ENCODE measurements at regions of chr15 and their contacts with region 1.

Region 1: GRCh38 chr15:101014921-101015841 is 96.0 kb downstream of the LRRK1 start:
- DNase-seq: peak in 1 of 2 donors; percentile 80
- ATAC-seq: peak; percentile 68

Region 2: GRCh38 chr15:100842756-100843725 is 172.1 kb before region 1 on chr15:
- intact Hi-C with region 1: no loop called
- DNase-seq: no peak
- ATAC-seq: no peak

Region 3: DNA sequence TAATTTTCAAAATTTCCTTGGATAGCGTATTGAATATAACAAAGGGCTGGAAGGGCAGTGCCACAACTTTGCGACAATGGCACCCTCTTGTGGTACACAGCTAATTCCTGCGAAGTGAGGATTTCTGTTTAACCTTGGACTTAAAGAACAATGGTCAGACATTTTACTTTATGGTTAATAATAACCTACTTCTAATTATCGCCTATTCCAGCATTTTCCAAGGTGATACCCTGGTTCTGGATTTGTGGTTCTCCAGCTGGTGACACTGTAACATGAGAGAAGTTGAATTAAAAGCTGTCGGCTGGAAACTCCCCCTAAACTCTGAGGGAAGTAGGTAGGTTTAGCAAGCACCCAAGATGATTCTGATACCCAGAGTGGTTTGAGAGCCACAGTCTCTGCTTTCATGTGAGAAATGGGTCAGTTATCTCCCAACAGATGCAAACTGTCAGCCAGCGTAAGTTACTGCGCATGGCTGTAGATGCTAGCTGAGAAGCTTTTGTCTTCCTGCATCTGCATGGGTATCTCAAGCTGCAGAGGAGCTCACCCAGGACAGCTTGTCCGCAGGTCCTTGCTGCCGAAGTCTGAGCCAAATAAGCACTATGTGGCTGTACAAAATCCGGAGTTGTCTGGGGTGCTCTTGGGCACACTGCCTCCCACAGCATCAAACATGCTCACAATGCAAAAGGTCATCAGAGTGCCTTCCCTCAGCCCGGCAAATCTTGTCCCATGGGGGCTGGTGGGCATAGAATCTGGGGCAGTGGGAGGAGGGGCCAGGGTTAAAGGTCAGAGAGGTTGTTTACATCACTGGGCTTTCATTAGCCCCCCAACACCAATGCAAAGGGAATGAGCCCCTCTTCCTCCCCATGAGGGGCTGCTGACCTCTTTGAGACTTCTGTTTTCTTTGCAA is 243.3 kb after region 1 on chr15:
- intact Hi-C with region 1: loop called (anchors 2 to 5 kb)
- DNase-seq: peak in 1 of 2 donors; percentile 60
- ATAC-seq: peak; percentile 88